HCT116 (cell line): ENCODE measurements at regions of chr4 and their contacts with region 1.

Region 1: DNA sequence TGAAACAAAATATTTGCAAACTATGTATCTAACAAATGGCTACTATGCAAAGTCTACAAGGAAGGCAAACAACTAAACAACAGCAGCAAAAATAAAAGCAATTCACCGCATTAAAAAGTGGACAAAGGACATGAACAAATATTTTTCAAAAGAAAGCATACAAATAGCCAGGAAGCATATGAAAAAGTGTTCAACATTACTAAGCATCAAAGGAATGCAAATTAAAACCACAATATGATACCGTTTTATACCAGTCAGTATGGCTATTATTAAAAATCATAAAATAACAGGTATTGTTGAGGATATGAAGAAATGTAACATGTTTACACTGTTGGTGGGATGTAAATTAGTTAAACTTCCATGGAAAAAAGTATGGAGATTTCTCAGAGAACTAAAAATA is 1106.7 kb downstream of the PDHA2 start:
- DNase-seq: no peak
- ATAC-seq: no peak
- H3K4me3 ChIP-seq: no peak overlapping the region
- H3K27ac ChIP-seq: no peak overlapping the region
- H3K4me1 ChIP-seq: no peaks in the 10 kb centered on the region
- H3K27me3 ChIP-seq: no peaks in the 10 kb centered on the region
- CTCF ChIP-seq: no peak
- POLR2A ChIP-seq: no peak
- RAD21 ChIP-seq: no peak

Region 2: GRCh38 chr4:97330917-97331316 is 384.4 kb after region 1 on chr4:
- CTCF ChIA-PET with region 1: no interaction called
- POLR2A ChIA-PET with region 1: no interaction called
- RAD21 ChIA-PET with region 1: no interaction called
- intact Hi-C with region 1: loop called (anchors 10 kb)
- DNase-seq: no peak
- ATAC-seq: no peak
- H3K4me3 ChIP-seq: no peak overlapping the region
- H3K27ac ChIP-seq: no peak overlapping the region
- H3K4me1 ChIP-seq: no peaks in the 10 kb centered on the region
- H3K27me3 ChIP-seq: no peaks in the 10 kb centered on the region
- CTCF ChIP-seq: no peak
- POLR2A ChIP-seq: no peak
- RAD21 ChIP-seq: no peak